ENCODE measurements at regions of chr1 and their contacts with region 1.

Region 1: GRCh38 chr1:201511941-201512539 is 5.1 kb upstream of the CSRP1 start:
- DNase-seq: no peak
- ATAC-seq: no peak
- H3K4me3 Mint-ChIP-seq: no peak overlapping the region
- H3K27ac Mint-ChIP-seq: no peak overlapping the region
- H3K4me1 Mint-ChIP-seq: peaks cover 41% of the 10 kb centered on the region
- H3K27me3 Mint-ChIP-seq: no peaks in the 10 kb centered on the region

Region 2: GRCh38 chr1:201436393-201436792 is 75.6 kb before region 1 on chr1:
- CTCF ChIA-PET with region 1: interaction called, 47 read pairs
- POLR2A ChIA-PET with region 1: no interaction called
- DNase-seq: no peak
- ATAC-seq: no peak
- H3K4me3 Mint-ChIP-seq: no peak overlapping the region
- H3K27ac Mint-ChIP-seq: no peak overlapping the region
- H3K4me1 Mint-ChIP-seq: peaks cover 5% of the 10 kb centered on the region
- H3K27me3 Mint-ChIP-seq: peaks cover 23% of the 10 kb centered on the region

Region 3: DNA sequence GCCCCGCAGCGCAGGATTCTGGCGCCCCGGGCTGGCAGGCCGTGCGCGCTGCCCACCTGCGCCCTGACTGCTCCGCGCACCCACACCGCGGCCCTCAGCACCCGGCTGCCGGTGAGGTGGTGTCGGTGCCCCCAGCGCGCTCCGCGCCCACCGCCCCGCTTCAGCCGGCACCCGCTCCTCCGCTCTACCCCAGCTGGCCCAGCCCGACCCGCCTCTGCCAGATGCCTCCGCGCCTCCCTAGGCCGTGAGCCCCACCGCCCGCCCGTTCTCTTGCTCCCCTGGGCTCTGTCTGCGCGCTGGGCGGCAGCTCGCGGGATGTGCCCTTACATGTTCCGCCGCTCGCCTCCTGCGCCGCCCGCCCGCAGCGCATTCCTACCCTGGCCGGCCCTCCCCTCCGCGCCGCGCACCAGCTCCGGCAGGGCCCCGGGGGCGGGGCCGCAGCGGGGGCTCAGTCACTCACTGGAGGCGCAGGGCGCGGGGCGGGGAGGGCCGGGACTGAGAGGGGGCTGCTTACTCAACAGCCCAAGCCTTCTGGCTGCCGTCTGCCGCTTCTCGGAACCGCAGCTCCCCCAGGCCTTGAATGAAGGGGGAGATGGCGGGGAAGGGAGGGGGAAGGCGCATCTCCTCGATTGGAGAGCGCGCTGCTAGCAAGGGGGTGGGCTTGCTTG is 43.1 kb before region 1 on chr1 and contains the start of gene PHLDA3:
- CTCF ChIA-PET with region 1: interaction called, 15 read pairs
- POLR2A ChIA-PET with region 1: interaction called, 3 read pairs
- DNase-seq: peak; percentile 72
- ATAC-seq: peak; percentile 86
- H3K4me3 Mint-ChIP-seq: peak within 1 kb of the TSS; percentile 84
- H3K27ac Mint-ChIP-seq: peak within 1 kb of the TSS; percentile 81
- H3K4me1 Mint-ChIP-seq: peaks cover 20% of the 10 kb centered on the region
- H3K27me3 Mint-ChIP-seq: peaks cover 35% of the 10 kb centered on the region
- total RNA-seq, gene PHLDA3: 17.3 to 18.7 TPM

Region 4: DNA sequence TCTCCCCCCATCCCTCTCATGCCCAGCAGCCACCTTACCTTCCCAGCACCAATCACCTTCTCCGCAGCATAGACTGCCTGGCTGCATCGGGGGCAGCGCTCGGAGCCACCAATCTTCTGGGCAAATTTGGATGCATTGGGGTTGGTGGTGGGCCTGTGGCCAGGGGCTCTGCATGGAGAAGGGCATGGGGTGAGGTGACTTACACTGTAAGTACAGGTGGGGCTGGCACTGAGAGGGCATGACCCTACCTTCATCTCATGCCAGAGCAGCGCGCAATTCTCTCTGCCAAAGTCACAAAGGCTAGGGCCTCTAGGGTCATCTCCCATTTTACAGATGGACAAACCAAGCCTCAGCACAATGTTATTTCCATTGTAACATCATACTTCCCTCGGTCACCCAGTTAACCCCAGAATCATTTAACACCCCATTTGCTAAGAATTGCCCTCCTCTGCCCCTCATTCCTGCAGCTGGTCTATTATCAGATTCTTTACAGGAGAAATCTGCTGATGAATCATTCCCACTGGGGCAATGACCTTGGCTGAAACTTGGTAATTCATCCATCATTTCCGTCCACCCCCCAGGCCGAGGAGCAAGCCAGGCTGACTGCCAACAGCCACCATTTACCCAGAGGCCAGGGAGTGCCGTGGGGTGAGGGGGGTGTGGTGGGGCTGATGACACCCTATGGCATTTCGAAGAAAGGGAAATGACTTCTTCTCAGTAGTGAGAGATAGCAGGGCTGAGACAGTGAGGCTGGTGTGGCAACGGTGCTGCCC is 23.0 kb before region 1 on chr1:
- CTCF ChIA-PET with region 1: interaction called, 373 read pairs
- POLR2A ChIA-PET with region 1: interaction called, 6 read pairs
- DNase-seq: no peak
- ATAC-seq: no peak
- H3K4me3 Mint-ChIP-seq: no peak overlapping the region
- H3K27ac Mint-ChIP-seq: no peak overlapping the region
- H3K4me1 Mint-ChIP-seq: peaks cover 13% of the 10 kb centered on the region
- H3K27me3 Mint-ChIP-seq: no peaks in the 10 kb centered on the region

Region 5: GRCh38 chr1:201530741-201531531 is 18.9 kb after region 1 on chr1:
- CTCF ChIA-PET with region 1: interaction called, 17 read pairs
- POLR2A ChIA-PET with region 1: no interaction called
- DNase-seq: peak; percentile 52
- ATAC-seq: peak; percentile 60
- H3K4me3 Mint-ChIP-seq: no peak overlapping the region
- H3K27ac Mint-ChIP-seq: no peak overlapping the region
- H3K4me1 Mint-ChIP-seq: no peaks in the 10 kb centered on the region
- H3K27me3 Mint-ChIP-seq: peaks cover 6% of the 10 kb centered on the region

Measured in activated CD8-positive, alpha-beta T cell treated with anti-CD3 and anti-CD28 coated beads, Interleukin-2, amount 10 ng/mL, durations not matched to agents 7 days and 5 days (primary cell).